Activated CD4-positive, alpha-beta T cell treated with anti-CD3 and anti-CD28 coated beads for 36 hours (primary cell): ENCODE measurements at regions of chr1 and their contacts with region 1.

Region 1: DNA sequence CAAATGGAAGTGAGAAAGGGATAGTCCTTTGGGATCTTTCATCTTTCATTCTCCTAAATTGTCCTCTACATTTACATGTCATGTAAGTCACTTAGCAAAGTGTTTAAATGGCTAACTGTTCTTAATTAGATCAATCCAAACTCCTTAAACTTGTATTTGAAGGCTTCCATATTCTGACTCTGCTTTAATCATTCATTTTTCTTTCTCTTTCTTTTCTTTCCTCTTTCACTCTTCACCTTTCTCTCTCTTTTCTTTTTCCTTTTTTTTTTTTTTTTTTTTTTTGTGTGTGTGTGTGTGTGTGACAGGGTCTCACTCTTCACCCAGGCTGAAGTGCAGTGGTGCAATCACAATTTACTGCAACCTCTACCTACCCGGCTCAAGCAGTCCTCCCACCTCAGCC is 71.7 kb downstream of the RPS27 start:
- DNase-seq: no peak
- ATAC-seq: no peak
- H3K4me3 Mint-ChIP-seq: no peak overlapping the region
- H3K27ac Mint-ChIP-seq: no peak overlapping the region
- H3K4me1 Mint-ChIP-seq: no peaks in the 10 kb centered on the region
- H3K27me3 Mint-ChIP-seq: peaks cover 4% of the 10 kb centered on the region

Region 2: GRCh38 chr1:154014154-154014910 is 48.0 kb before region 1 on chr1:
- CTCF ChIA-PET with region 1: no interaction called
- POLR2A ChIA-PET with region 1: no interaction called
- intact Hi-C with region 1: loop called in 1 of 2 experiments (anchors 5 kb)
- DNase-seq: peak; percentile 38
- ATAC-seq: peak; percentile 70
- H3K4me3 Mint-ChIP-seq: no peak overlapping the region
- H3K27ac Mint-ChIP-seq: no peak overlapping the region
- H3K4me1 Mint-ChIP-seq: peaks cover 2% of the 10 kb centered on the region
- H3K27me3 Mint-ChIP-seq: no peaks in the 10 kb centered on the region